ENCODE measurements at regions of chr6 and their contacts with region 1.

Region 1: GRCh38 chr6:43059168-43060033 is at the starts of genes KLC4 and MRPL2:
- DNase-seq: peak; percentile 94 to 99 (median 98)
- ATAC-seq: peak; percentile 97
- H3K4me3 ChIP-seq: peak within 1 kb of the TSS; percentile 81 to 96
- H3K4me3 Mint-ChIP-seq: peak within 1 kb of the TSS; percentile 95
- H3K27ac ChIP-seq: peak within 1 kb of the TSS; percentile 84 to 91
- H3K27ac Mint-ChIP-seq: peak within 1 kb of the TSS; percentile 99
- H3K4me1 ChIP-seq: peaks cover 19% of the 10 kb centered on the region
- H3K4me1 Mint-ChIP-seq: peaks cover 44% of the 10 kb centered on the region
- H3K27me3 ChIP-seq: no peaks in the 10 kb centered on the region
- H3K27me3 Mint-ChIP-seq: no peaks in the 10 kb centered on the region
- CTCF ChIP-seq: no peak
- total RNA-seq, gene KLC4: 42.1 to 57.4 TPM
- total RNA-seq, gene MRPL2: 38.9 to 41.6 TPM

Region 2: DNA sequence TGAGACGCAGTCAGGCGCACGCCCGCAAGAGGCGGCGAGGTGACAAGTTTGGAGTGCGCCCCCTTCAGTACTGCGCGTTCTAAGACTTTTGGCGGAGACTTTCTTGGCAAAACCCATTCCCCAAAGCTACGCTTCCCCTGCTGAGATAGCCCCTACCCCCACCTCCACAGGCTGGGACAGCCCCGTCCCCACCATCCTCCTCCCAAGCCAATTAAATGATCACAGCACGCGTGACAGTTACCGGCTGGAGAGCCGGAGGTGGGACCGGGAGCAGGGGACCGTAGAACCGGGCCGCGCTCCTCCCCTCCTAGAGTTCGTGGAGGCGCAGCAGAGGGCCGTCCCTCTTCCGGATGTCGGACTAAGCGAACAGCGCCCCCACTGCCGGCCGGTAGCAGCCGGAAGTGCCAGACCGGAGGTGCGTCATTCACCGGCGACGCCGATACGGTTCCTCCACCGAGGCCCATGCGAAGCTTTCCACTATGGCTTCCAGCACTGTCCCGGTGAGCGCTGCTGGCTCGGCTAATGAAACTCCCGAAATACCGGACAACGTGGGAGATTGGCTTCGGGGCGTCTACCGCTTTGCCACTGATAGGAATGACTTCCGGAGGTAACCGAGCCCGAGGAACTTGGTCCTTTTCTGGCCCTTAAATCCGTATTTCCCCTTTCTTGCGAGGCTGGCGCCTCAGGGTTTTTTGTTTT is 1272.0 kb before region 1 on chr6 and contains the start of gene TOMM6:
- CTCF ChIA-PET with region 1: no interaction called
- POLR2A ChIA-PET with region 1: no interaction called
- intact Hi-C with region 1: loop called in 1 of 2 experiments (anchors 5 kb)
- DNase-seq: peak; percentile 90 to 97 (median 96)
- ATAC-seq: peak; percentile 78
- H3K4me3 ChIP-seq: peak within 1 kb of the TSS; percentile 80 to 96
- H3K4me3 Mint-ChIP-seq: peak within 1 kb of the TSS; percentile 97
- H3K27ac ChIP-seq: peak within 1 kb of the TSS; percentile 89 to 94
- H3K27ac Mint-ChIP-seq: peak within 1 kb of the TSS; percentile 99
- H3K4me1 ChIP-seq: peaks cover 6% of the 10 kb centered on the region
- H3K4me1 Mint-ChIP-seq: peaks cover 15% of the 10 kb centered on the region
- H3K27me3 ChIP-seq: no peaks in the 10 kb centered on the region
- H3K27me3 Mint-ChIP-seq: no peaks in the 10 kb centered on the region
- CTCF ChIP-seq: peak; percentile 78
- total RNA-seq, gene TOMM6: 94.3 to 101 TPM

Region 3: GRCh38 chr6:42928986-42929820 is 130.2 kb before region 1 on chr6 and contains the start of gene CNPY3:
- CTCF ChIA-PET with region 1: interaction called, 4 read pairs
- POLR2A ChIA-PET with region 1: interaction called, 33 read pairs
- intact Hi-C with region 1: loop called (anchors 1 to 2 kb)
- DNase-seq: peak; percentile 91 to 98 (median 94)
- ATAC-seq: peak; percentile 77
- H3K4me3 ChIP-seq: peak within 1 kb of the TSS; percentile 70 to 82
- H3K4me3 Mint-ChIP-seq: peak within 1 kb of the TSS; percentile 99
- H3K27ac ChIP-seq: peak within 1 kb of the TSS; percentile 93 to 95
- H3K27ac Mint-ChIP-seq: peak within 1 kb of the TSS; percentile 98
- H3K4me1 ChIP-seq: peaks cover 43% of the 10 kb centered on the region
- H3K4me1 Mint-ChIP-seq: peaks cover 45% of the 10 kb centered on the region
- H3K27me3 ChIP-seq: no peaks in the 10 kb centered on the region
- H3K27me3 Mint-ChIP-seq: no peaks in the 10 kb centered on the region
- CTCF ChIP-seq: no peak
- total RNA-seq, gene CNPY3: 43.9 to 47.4 TPM

Region 4: DNA sequence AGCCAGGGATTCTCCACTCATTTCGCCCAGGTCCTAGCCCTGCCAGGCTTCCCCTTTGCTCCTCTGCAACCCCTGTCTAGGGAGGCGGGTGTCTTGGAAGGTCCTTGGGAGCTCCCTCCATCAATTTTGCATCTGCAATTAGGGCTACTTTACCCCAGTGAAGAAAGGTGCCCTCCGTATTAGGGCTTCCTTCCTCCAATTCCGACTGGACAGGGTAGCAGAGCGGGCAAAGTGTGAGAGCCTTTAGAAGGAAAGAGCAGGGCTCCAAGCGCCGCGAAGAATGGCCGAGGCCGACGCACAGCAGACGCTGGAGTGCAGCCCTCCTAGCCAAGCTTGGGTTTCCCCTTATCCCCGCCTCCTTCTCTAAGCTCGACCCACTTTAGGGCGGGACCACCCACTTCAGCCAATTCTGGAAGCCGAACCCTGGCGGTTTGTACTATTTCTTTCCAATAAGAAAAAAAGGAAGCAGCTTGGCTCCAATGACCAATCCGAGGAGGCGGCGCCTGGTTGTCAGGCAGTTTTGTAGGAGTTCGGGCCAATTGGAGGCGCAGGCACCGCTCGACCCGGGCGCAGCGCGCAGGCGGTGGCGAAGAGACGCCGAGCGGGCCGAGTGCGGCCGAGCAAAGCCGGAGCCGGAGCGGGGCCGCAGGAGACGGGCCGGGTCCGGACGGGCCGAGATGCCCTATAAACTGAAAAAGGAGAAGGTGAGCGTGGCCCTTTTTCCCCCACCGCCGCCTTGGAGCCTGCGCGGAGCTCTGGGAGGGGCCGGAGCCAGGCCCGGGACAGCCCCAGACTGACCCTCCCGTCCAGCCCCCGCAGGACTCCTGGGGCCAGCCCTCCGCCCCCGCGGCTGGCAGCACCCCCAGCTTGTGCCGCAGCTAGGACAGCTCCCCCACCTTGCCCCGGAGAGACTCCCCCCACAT is 75.1 kb before region 1 on chr6 and contains the start of gene PPP2R5D:
- CTCF ChIA-PET with region 1: no interaction called
- POLR2A ChIA-PET with region 1: interaction called, 17 read pairs
- intact Hi-C with region 1: loop called in 1 of 2 experiments (anchors 1 kb)
- DNase-seq: peak; percentile 93 to 99 (median 96)
- ATAC-seq: peak; percentile 93
- H3K4me3 ChIP-seq: peak within 1 kb of the TSS; percentile 81 to 86
- H3K4me3 Mint-ChIP-seq: peak within 1 kb of the TSS; percentile 94
- H3K27ac ChIP-seq: peak within 1 kb of the TSS; percentile 78 to 86
- H3K27ac Mint-ChIP-seq: peak within 1 kb of the TSS; percentile 95
- H3K4me1 ChIP-seq: peaks cover 44% of the 10 kb centered on the region
- H3K4me1 Mint-ChIP-seq: peaks cover 62% of the 10 kb centered on the region
- H3K27me3 ChIP-seq: no peaks in the 10 kb centered on the region
- H3K27me3 Mint-ChIP-seq: no peaks in the 10 kb centered on the region
- CTCF ChIP-seq: no peak
- total RNA-seq, gene PPP2R5D: 14.1 to 19.5 TPM

Region 5: GRCh38 chr6:43174263-43175112 is 115.1 kb after region 1 on chr6:
- CTCF ChIA-PET with region 1: no interaction called
- POLR2A ChIA-PET with region 1: interaction called, 4 read pairs
- intact Hi-C with region 1: loop called (anchors 1 to 2 kb)
- DNase-seq: peak; percentile 77 to 98 (median 92)
- ATAC-seq: peak; percentile 52
- H3K4me3 ChIP-seq: peak overlapping the region; percentile 4 to 50
- H3K4me3 Mint-ChIP-seq: peak overlapping the region; percentile 63
- H3K27ac ChIP-seq: peak overlapping the region; percentile 62 to 89
- H3K27ac Mint-ChIP-seq: peak overlapping the region; percentile 95
- H3K4me1 ChIP-seq: peaks cover 40% of the 10 kb centered on the region
- H3K4me1 Mint-ChIP-seq: peaks cover 45% of the 10 kb centered on the region
- H3K27me3 ChIP-seq: no peaks in the 10 kb centered on the region
- H3K27me3 Mint-ChIP-seq: no peaks in the 10 kb centered on the region
- CTCF ChIP-seq: no peak

Region 6: DNA sequence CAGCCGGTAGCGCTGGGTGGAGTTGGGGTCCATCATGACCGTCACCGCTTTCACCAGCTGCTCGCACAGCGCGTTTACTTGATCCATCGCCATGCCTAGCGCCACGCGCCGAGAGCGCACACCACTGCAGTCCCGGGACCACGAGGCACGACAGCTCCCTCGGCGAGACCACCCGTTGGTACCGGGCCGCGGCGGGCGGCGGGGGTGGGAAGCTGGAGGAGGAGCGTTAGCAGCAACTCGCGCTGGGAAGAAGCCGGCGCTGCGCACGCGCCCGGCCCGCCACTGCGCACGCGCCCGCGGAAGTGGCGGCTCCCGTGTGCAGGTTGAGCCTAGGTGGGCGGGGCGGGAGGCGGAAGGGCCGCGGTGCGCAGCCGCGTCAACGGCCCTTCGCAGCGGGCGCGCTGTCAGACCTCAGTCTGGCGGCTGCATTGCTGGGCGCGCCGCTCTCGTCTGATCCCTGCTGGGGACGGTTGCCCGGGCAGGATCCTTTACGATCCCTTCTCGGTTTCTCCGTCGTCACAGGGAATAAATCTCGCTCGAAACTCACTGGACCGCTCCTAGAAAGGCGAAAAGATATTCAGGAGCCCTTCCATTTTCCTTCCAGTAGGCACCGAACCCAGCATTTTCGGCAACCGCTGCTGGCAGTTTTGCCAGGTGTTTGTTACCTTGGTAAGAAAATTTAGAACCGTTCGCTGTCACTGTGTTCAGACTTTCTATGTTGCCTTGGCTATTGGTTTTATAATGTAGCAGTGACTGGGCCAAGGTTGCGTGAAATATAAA is 516.6 kb after region 1 on chr6 and contains the starts of genes POLH and XPO5:
- CTCF ChIA-PET with region 1: no interaction called
- POLR2A ChIA-PET with region 1: no interaction called
- intact Hi-C with region 1: loop called in 1 of 2 experiments (anchors 10 kb)
- DNase-seq: peak; percentile 80 to 97 (median 90)
- ATAC-seq: peak; percentile 96
- H3K4me3 ChIP-seq: peak within 1 kb of the TSS; percentile 78 to 89
- H3K4me3 Mint-ChIP-seq: peak within 1 kb of the TSS; percentile 95
- H3K27ac ChIP-seq: peak within 1 kb of the TSS; percentile 55 to 66
- H3K27ac Mint-ChIP-seq: peak within 1 kb of the TSS; percentile 93
- H3K4me1 ChIP-seq: peaks cover 20% of the 10 kb centered on the region
- H3K4me1 Mint-ChIP-seq: peaks cover 36% of the 10 kb centered on the region
- H3K27me3 ChIP-seq: no peaks in the 10 kb centered on the region
- H3K27me3 Mint-ChIP-seq: no peaks in the 10 kb centered on the region
- CTCF ChIP-seq: no peak
- total RNA-seq, gene POLH: 3.4 to 3.7 TPM
- total RNA-seq, gene XPO5: 29.6 to 39.9 TPM

Region 7: GRCh38 chr6:43608310-43608763 is 548.9 kb after region 1 on chr6:
- CTCF ChIA-PET with region 1: no interaction called
- POLR2A ChIA-PET with region 1: no interaction called
- intact Hi-C with region 1: no loop called
- DNase-seq: peak; percentile 23 to 75 (median 61)
- ATAC-seq: peak; percentile 38
- H3K4me3 ChIP-seq: no peak overlapping the region
- H3K4me3 Mint-ChIP-seq: no peak overlapping the region
- H3K27ac ChIP-seq: no peak overlapping the region
- H3K27ac Mint-ChIP-seq: no peak overlapping the region
- H3K4me1 ChIP-seq: no peaks in the 10 kb centered on the region
- H3K4me1 Mint-ChIP-seq: peaks cover 3% of the 10 kb centered on the region
- H3K27me3 ChIP-seq: no peaks in the 10 kb centered on the region
- H3K27me3 Mint-ChIP-seq: no peaks in the 10 kb centered on the region
- CTCF ChIP-seq: peak; percentile 63

Region 8: GRCh38 chr6:44246663-44247337 is 1187.4 kb after region 1 on chr6 and contains the start of gene HSP90AB1:
- CTCF ChIA-PET with region 1: no interaction called
- POLR2A ChIA-PET with region 1: no interaction called
- intact Hi-C with region 1: loop called in 1 of 2 experiments (anchors 10 kb)
- DNase-seq: peak; percentile 89 to 99 (median 94)
- ATAC-seq: peak; percentile 79
- H3K4me3 ChIP-seq: peak within 1 kb of the TSS; percentile 96 to 98
- H3K4me3 Mint-ChIP-seq: peak within 1 kb of the TSS; percentile 99
- H3K27ac ChIP-seq: peak within 1 kb of the TSS; percentile 95 to 96
- H3K27ac Mint-ChIP-seq: peak within 1 kb of the TSS; percentile 98
- H3K4me1 ChIP-seq: peaks cover 26% of the 10 kb centered on the region
- H3K4me1 Mint-ChIP-seq: peaks cover 50% of the 10 kb centered on the region
- H3K27me3 ChIP-seq: no peaks in the 10 kb centered on the region
- H3K27me3 Mint-ChIP-seq: no peaks in the 10 kb centered on the region
- CTCF ChIP-seq: no peak
- total RNA-seq, gene HSP90AB1: 561 to 585 TPM

Measured in CD8-positive, alpha-beta T cell (primary cell).